IMR-90 (cell line): ENCODE measurements at regions of chr11 and their contacts with region 1.

Region 1: GRCh38 chr11:118152020-118152551 is 537 bp downstream of the SCN4B start:
- DNase-seq: no peak
- ATAC-seq: no peak
- H3K4me3 ChIP-seq: peak overlapping the region; percentile 39
- H3K27ac ChIP-seq: no peak overlapping the region
- H3K4me1 ChIP-seq: no peaks in the 10 kb centered on the region; the same call in 1 of the 2 replicates
- H3K27me3 ChIP-seq: peaks cover 74% of the 10 kb centered on the region
- CTCF ChIP-seq: no peak
- POLR2A ChIP-seq: no peak
- RAD21 ChIP-seq: no peak

Region 2: GRCh38 chr11:117671377-117671776 is 480.7 kb before region 1 on chr11:
- CTCF ChIA-PET with region 1: no interaction called
- POLR2A ChIA-PET with region 1: interaction called, 13 read pairs
- dilution Hi-C with region 1: no loop called
- in situ Hi-C with region 1: no loop called
- intact Hi-C with region 1: no loop called
- DNase-seq: no peak
- ATAC-seq: no peak
- H3K4me3 ChIP-seq: no peak overlapping the region
- H3K27ac ChIP-seq: no peak overlapping the region
- H3K4me1 ChIP-seq: no peaks in the 10 kb centered on the region
- H3K27me3 ChIP-seq: peaks cover 19% of the 10 kb centered on the region
- CTCF ChIP-seq: no peak
- POLR2A ChIP-seq: no peak
- RAD21 ChIP-seq: no peak

Region 3: GRCh38 chr11:118198370-118198769 is 46.3 kb after region 1 on chr11:
- CTCF ChIA-PET with region 1: no interaction called
- POLR2A ChIA-PET with region 1: no interaction called
- dilution Hi-C with region 1: no loop called
- in situ Hi-C with region 1: no loop called
- intact Hi-C with region 1: no loop called
- DNase-seq: peak; percentile 44
- ATAC-seq: peak; percentile 88
- H3K4me3 ChIP-seq: no peak overlapping the region
- H3K27ac ChIP-seq: no peak overlapping the region
- H3K4me1 ChIP-seq: no peaks in the 10 kb centered on the region
- H3K27me3 ChIP-seq: peaks cover 4% of the 10 kb centered on the region
- CTCF ChIP-seq: peak; percentile 77
- POLR2A ChIP-seq: no peak
- RAD21 ChIP-seq: peak; percentile 73